ENCODE measurements at regions of chr21 and their contacts with region 1.

Region 1: GRCh38 chr21:32826329-32827167 is 55.0 kb upstream of the PAXBP1 start:
- DNase-seq: no peak
- H3K4me3 ChIP-seq: no peak overlapping the region
- CTCF ChIP-seq: peak; percentile 55

Region 2: GRCh38 chr21:32653311-32653901 is 173.1 kb before region 1 on chr21:
- CTCF ChIA-PET with region 1: interaction called, 15 read pairs
- POLR2A ChIA-PET with region 1: no interaction called
- DNase-seq: no peak
- H3K4me3 ChIP-seq: no peak overlapping the region
- CTCF ChIP-seq: peak; percentile 55

Region 3: GRCh38 chr21:32782698-32783097 is 43.9 kb before region 1 on chr21:
- CTCF ChIA-PET with region 1: interaction called, 44 read pairs
- POLR2A ChIA-PET with region 1: no interaction called
- DNase-seq: no peak
- H3K4me3 ChIP-seq: no peak overlapping the region
- CTCF ChIP-seq: no peak

Region 4: DNA sequence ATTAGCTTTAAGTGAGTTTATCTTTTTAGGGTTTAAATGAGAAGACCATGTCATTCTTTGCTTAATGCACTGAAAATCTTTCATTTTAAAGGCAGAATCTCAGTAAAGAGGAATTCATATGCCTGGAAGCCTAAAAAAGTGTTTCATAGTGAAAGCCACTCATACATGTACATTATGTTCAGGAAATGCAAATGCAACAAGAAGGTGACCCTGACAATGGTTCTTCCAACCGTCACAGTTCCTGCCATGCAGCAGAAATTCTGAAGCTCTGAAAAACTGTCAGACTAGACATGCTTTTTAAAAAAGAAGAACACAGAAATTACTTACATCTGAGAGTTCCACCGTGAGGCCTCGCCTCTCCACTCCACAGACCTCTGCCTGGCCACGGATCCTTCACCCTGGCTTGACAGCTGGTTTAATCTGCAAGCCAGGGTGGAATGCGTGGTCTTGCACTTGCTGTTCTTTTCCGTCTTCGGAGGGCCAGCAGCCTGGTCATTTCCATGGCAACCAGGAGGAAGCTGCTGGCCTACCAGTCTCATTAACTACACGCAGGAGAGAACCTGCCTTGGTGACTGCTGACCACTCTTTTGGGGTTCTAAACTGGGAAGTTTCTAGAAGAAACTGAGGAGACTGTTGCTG is 13.2 kb before region 1 on chr21:
- CTCF ChIA-PET with region 1: interaction called, 14 read pairs
- POLR2A ChIA-PET with region 1: no interaction called
- DNase-seq: no peak
- H3K4me3 ChIP-seq: no peak overlapping the region
- CTCF ChIP-seq: no peak

Region 5: DNA sequence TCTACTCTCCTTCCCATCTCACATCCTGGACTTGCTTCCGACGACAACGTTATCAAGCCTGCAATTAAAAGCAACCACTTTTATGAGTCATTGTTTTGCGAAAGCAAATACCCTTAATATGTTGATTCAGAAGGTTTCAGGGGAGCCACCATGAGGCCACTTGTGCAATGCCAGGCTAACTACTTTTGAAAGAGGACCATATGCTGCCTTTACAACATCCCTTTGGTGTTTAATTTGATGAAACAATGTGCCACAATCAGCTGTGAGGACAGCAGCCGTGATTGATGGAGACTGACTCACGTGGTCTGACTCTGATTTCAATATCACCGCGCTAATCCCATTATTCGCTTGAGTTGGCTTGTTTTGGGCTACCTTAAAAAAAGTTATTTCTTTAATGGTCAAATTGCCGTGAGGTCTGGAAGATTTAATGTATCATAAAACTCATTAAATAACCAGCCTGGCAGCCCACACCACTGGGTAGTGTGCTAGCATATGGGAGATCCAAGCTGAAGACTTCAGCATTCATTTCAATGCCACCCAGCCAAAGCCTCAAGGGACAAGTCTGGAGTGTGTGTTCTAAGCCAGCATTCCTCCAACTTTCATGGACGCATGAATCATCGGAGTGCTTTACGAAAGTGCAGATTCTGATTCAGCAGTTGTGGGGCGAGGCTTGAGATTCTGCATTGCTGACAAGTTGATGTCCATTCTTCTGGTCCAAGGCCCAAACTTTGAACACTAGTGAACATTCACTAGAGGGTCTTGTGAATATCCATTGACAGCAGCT is 18.3 kb after region 1 on chr21:
- CTCF ChIA-PET with region 1: no interaction called
- POLR2A ChIA-PET with region 1: no interaction called
- DNase-seq: peak; percentile 21
- H3K4me3 ChIP-seq: no peak overlapping the region
- CTCF ChIP-seq: no peak